AG04449 (cell line): ENCODE measurements at regions of chr2 and their contacts with region 1.

Region 1: GRCh38 chr2:178112202-178113152 is at the start of gene RBM45:
- DNase-seq: peak; percentile 38
- H3K4me3 ChIP-seq: peak within 1 kb of the TSS; percentile 74
- CTCF ChIP-seq: peak; percentile 98

Region 2: GRCh38 chr2:177084607-177085006 is 1027.9 kb before region 1 on chr2:
- CTCF ChIA-PET with region 1: no interaction called
- POLR2A ChIA-PET with region 1: no interaction called
- DNase-seq: no peak
- H3K4me3 ChIP-seq: no peak overlapping the region
- CTCF ChIP-seq: no peak

Region 3: DNA sequence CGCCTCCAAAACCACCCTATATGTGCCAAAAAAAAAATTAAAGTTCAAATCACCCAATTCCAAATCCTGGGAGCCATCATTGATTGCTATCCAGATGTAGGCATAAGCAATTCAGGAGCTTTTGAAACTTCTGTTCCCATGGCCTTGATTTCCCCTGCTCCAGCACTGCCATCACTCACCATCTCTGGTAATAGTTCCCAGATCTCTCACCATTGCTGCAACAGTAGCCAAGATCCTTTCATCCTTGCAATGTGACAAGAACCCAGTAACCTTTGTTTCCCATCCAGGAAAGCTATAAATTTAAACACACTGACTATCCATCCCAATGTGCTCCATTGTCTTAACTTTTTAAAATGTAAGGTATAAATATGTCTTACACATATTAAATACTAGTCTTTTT is 195.3 kb before region 1 on chr2:
- CTCF ChIA-PET with region 1: no interaction called
- POLR2A ChIA-PET with region 1: no interaction called
- DNase-seq: no peak
- H3K4me3 ChIP-seq: no peak overlapping the region
- CTCF ChIP-seq: no peak

Region 4: DNA sequence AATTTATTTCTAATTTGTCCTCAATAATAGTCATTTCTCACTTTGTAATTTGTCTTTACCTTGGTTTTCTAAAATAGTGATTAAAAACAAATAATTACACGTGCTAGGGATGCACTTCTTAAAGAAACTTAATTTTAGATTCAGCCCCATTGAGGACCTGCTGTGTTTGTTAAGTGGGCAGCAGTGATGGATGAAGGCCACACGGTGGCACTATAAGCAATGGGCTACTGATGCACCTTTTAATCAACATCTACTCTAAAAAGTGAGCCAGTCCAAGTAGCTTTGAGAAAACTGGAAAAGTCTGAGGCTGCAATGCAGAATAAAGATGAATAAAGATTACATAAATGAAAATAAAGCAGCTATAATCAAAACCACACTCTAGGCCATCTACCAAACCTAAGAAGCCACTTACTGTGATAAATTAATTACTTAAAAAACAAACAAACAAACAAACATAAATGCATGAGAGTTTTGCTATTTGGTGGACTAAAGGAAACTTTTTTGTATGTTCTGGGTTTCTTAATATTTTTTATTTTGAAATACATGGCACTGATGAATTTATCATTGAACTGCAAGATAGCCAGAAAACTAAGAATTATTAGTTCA is 129.2 kb before region 1 on chr2:
- CTCF ChIA-PET with region 1: interaction called, 113 read pairs
- POLR2A ChIA-PET with region 1: no interaction called
- DNase-seq: no peak
- H3K4me3 ChIP-seq: no peak overlapping the region
- CTCF ChIP-seq: peak; percentile 85

Region 5: DNA sequence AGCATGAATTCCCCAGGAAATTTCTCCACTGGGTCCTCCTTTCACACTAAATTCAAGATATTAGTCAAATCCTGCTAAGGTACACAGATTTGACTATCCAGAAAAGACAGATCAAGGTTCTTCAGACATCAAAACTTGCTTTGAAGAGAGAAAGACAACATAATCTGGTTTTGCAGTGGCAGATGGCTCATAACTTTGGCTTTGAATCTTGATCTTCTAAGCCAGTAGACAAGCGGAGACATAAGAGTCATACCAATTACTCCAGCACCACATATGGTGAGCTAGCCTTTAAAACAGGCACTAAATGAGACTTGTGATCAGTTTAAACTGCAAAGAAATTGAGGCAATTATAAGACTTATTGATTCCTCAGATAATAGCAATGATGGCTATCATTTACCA is 69.2 kb before region 1 on chr2:
- CTCF ChIA-PET with region 1: no interaction called
- POLR2A ChIA-PET with region 1: no interaction called
- DNase-seq: no peak
- H3K4me3 ChIP-seq: no peak overlapping the region
- CTCF ChIP-seq: no peak

Region 6: GRCh38 chr2:178072383-178073301 is 39.8 kb before region 1 on chr2 and contains the start of gene PDE11A:
- CTCF ChIA-PET with region 1: interaction called, 46 read pairs
- POLR2A ChIA-PET with region 1: no interaction called
- DNase-seq: peak; percentile 17
- H3K4me3 ChIP-seq: peak within 1 kb of the TSS; percentile 59
- CTCF ChIP-seq: no peak

Region 7: DNA sequence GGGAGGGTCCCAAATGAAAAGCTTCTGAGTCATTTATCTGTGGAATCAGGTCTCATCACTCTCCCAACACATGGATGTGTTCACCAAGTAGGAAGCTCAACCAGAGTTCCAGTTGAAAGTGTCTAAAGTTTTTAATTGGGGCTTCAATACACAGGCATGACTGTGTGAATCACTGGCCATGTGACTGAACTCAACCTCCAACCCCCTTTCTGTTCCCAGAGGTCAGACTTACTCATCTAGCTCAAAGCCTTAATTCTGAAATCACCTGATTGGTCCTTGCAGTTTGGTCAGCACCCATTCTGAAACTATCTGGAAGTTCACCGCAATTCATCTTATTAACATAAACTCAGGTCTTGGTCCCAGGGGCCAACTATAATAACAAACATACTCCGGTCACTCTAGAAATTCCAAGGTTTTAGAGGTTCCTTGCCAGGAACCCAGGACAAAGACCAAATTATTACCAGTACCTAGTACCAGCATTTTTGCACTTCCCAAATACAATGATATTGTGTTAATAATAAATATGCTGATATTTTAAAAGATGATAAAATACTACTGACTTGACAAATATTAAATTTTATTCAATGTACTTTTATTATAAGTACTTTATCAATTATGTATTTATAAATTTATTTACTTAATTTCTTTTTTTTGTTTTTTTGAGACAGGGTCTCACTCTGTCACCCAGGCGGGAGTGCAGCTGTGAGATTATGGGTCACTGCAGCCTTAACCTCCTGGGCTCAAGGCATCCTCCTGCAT is 11.0 kb before region 1 on chr2:
- CTCF ChIA-PET with region 1: interaction called, 21 read pairs
- POLR2A ChIA-PET with region 1: no interaction called
- DNase-seq: no peak
- H3K4me3 ChIP-seq: no peak overlapping the region
- CTCF ChIP-seq: no peak

Region 8: DNA sequence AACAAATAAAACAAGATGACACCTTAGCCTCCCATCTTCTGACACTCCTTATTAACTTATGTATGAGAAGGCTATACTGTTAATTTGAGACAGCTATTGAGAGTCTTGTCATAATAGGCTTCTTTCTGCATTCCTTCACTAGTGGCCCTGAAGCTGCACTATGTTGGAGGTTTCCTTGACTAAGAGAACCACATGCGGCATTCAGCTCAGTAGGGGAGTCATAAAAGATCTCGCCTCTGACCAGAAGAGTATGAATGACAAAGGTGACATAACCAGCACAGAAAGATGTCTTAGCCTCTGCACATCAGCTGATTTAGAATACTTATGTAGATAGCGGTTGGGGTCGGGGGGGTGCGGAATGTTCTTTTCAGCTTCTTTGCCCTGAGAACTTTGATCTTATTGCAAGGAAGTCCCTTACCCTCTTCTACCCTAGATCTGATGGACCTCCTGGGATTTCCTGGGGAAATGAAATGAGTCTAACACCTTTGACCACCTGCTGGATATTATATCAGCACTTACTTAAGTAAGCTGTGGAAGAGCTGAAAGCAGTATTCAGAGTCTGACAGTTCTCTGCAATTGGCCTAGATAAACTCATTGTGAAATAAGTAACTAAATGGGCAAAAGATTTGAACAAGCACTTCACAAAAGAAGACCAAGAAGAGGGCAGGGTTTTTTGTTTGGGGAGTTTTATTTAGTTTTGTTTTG is 24.0 kb after region 1 on chr2:
- CTCF ChIA-PET with region 1: interaction called, 91 read pairs
- POLR2A ChIA-PET with region 1: no interaction called
- DNase-seq: no peak
- H3K4me3 ChIP-seq: no peak overlapping the region
- CTCF ChIP-seq: no peak

Region 9: DNA sequence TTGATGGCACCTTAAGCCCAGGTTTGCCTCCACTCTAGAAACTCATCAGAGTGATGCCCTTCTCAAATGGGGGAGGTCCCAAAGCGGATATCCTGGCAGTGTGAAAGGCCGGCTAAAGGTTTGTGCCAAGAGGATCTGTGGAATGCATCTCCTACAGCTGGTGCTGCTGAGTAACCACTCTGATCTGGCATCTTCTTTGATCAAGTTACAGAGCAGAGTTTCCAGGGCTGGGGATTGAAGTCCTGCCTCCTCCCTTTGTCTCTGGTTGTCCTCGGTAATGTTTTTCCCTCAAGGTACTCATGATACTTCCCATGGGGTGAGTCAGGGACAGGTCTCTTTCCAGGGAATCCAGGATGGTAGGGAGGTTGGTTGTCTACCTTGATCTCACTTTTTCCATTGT is 313.9 kb after region 1 on chr2:
- CTCF ChIA-PET with region 1: interaction called, 282 read pairs
- POLR2A ChIA-PET with region 1: no interaction called
- DNase-seq: no peak
- H3K4me3 ChIP-seq: no peak overlapping the region
- CTCF ChIP-seq: no peak